Panc1 (cell line): ENCODE measurements at regions of chr21 and their contacts with region 1.

Region 1: DNA sequence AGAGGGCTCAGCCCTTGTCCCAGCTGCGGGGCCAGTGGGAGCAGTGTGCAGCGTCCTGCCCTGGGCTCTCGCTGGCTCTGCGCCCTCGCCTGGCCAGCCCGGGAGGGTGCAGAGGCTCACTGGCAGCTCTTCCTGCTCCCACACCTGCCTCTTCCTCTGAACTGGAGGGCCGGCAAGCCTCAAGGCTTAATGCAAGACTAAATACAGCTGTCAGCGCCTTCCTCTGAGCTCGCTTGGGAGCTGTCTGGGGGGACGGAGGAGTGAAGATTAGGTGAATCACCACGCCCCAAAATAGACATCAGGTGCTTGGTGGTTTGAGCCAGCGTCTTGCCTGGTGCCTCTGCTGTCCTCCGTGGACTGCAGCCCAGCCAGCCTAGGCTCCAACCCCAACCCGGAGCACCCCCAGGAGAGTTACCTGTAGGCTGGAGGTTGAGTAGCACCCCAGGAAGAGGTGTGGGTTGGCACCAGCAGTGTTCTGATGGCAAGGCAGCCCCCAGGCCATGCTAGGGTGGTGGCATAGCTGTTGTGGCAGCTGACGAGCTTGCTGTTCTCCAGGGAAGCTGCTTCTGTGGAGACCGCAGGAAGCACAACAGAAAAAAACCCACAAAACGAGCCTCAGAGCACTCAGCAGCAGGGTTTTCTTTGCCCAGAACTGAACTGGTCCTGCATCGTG is 36.9 kb downstream of the UMODL1 start:
- DNase-seq: no peak
- ATAC-seq: peak; percentile 98
- H3K4me3 ChIP-seq: no peak overlapping the region
- H3K27ac ChIP-seq: no peak overlapping the region
- H3K4me1 ChIP-seq: no peaks in the 10 kb centered on the region
- H3K27me3 ChIP-seq: no peaks in the 10 kb centered on the region
- CTCF ChIP-seq: peak; percentile 89

Region 2: GRCh38 chr21:41733949-41734645 is 373.9 kb before region 1 on chr21:
- CTCF ChIA-PET with region 1: no interaction called
- POLR2A ChIA-PET with region 1: no interaction called
- in situ Hi-C with region 1: no loop called
- intact Hi-C with region 1: no loop called
- DNase-seq: no peak
- ATAC-seq: no peak
- H3K4me3 ChIP-seq: no peak overlapping the region
- H3K27ac ChIP-seq: peak overlapping the region; percentile 57; the same call in 1 of the 2 replicates
- H3K4me1 ChIP-seq: peaks cover 7% of the 10 kb centered on the region
- H3K27me3 ChIP-seq: no peaks in the 10 kb centered on the region
- CTCF ChIP-seq: no peak

Region 3: DNA sequence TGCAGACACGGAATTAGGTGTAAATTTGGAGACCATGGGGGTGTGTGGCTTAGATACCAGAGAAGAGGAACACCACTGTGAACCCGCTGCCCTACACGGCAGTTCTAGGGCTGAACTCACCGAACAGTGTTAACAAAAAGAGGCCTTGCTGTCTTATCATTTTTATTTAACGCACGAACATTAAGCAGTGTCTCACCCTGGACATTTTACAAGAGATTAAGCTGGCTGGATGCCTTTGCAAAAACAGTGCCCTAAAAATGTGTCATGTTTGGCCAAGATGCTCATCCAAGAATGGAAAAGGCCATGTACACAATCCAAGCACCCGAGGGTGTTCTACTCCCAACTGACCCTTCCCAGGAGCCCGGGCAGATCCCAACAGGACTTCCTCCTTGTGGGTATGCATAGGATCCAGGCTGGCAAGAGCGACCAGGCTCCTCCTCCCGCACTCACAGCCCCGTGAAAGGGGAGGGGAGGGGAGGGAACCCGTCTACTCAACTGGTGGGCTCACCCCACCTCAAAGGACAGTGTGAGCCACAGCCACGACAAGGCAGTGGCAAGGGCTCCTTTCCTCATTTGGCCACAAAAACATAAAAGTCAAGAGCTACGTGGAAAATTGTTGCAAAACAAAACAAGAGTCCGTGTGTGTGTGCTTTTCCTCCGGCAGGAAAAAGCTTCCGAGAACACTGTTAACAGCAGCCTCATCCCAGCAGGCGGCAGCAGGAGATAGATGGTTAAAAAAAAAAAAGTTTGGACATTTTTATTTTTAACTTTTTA is 174.5 kb before region 1 on chr21:
- CTCF ChIA-PET with region 1: interaction called, 3 read pairs
- POLR2A ChIA-PET with region 1: no interaction called
- in situ Hi-C with region 1: no loop called
- intact Hi-C with region 1: loop called (anchors 10 kb)
- DNase-seq: no peak
- ATAC-seq: peak; percentile 78
- H3K4me3 ChIP-seq: peak overlapping the region; percentile 29 to 67
- H3K27ac ChIP-seq: peak overlapping the region; percentile 81
- H3K4me1 ChIP-seq: peaks cover 35% of the 10 kb centered on the region
- H3K27me3 ChIP-seq: no peaks in the 10 kb centered on the region
- CTCF ChIP-seq: peak; percentile 68

Region 4: GRCh38 chr21:42039911-42040351 is 68.1 kb before region 1 on chr21:
- CTCF ChIA-PET with region 1: no interaction called
- POLR2A ChIA-PET with region 1: no interaction called
- in situ Hi-C with region 1: no loop called
- intact Hi-C with region 1: loop called (anchors 10 kb)
- DNase-seq: no peak
- ATAC-seq: peak; percentile 6; the same call in 1 of the 2 replicates
- H3K4me3 ChIP-seq: no peak overlapping the region
- H3K27ac ChIP-seq: no peak overlapping the region
- H3K4me1 ChIP-seq: no peaks in the 10 kb centered on the region
- H3K27me3 ChIP-seq: no peaks in the 10 kb centered on the region
- CTCF ChIP-seq: no peak